Prostate gland (tissue), 2 donors: ENCODE measurements at regions of chr12 and their contacts with region 1.

Region 1: DNA sequence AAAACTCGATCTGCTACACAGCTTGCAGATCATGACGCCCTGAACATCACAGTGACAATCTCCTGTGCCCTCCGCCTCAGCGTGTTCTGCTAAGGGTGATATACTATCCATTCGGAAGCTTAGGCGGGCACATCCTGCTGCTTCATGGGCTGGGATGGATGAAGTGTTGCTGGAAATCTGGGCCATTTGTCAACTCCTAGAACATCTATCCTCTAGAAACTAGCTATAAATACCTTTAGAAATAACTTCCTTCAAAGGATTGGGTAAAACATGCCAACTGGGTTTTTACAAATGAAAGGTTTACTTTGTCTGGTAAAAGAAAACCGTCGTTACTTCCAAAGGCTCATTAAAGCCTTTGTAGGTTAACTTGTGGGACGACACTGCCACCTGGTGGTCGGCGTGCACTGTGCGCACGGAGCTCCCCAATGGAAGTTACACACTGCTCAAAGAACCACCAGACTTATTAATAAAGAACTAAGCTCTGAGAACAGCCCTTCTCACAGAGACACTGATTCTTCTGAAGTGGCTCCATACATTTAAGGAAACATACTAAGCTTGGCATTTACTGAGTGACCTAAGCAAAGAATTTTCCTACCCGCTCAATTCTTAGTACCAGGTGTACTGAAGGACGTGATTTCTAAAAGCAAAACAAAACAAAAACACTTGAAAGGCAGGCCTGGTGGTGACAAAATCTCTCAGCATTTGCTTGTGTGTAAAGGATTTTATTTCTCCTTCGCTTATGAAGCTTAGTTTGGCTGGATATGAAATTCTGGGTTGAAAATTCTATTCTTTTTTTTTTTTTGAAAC is 21.6 kb upstream of the CACNA2D4 start:
- DNase-seq: peak; percentile 81
- H3K4me3 ChIP-seq: no peak overlapping the region
- H3K27ac ChIP-seq: peak overlapping the region; percentile 21 to 42
- H3K4me1 ChIP-seq: no peaks in the 10 kb centered on the region
- H3K27me3 ChIP-seq: no peaks in the 10 kb centered on the region
- CTCF ChIP-seq: peak; percentile 92 to 99 (median 96)
- POLR2A ChIP-seq: no peak

Region 2: DNA sequence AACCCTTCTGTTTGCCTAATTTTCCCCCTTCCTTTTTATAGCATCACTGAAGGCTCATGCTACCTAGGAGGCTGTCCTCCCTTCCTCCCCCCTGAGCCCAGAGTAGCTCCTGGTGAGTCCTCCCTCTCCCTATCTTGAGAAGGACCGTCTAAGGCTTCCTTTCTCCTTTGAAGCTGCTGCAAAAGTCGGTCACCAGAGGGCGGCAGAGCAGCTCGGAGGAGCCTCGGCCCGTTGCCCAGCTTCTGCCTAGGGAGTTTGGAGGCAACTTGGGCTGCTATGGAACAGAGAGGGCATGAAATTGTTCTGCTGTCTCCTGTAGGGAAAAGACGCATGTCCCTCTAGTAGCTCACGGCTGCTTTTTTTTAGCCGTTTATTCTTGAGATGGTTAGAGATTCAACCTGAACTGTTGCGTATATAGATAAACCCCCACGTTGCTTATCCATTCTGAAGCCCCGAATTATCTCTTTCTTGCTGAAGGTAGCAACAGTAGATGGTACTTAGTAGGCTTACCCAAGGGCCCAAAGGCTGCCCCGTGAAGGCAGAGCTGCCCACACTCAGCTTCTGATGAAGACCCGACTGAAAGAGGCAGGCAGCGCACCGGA is 305.3 kb before region 1 on chr12:
- intact Hi-C with region 1: loop called (anchors 5 kb)
- DNase-seq: peak; percentile 67
- H3K4me3 ChIP-seq: no peak overlapping the region
- H3K27ac ChIP-seq: peak overlapping the region; percentile 17 to 26
- H3K4me1 ChIP-seq: peaks cover 8% of the 10 kb centered on the region
- H3K27me3 ChIP-seq: no peaks in the 10 kb centered on the region
- CTCF ChIP-seq: peak; percentile 9 to 77 (median 64)
- POLR2A ChIP-seq: no peak

Region 3: GRCh38 chr12:1644534-1645438 is 295.2 kb before region 1 on chr12:
- intact Hi-C with region 1: loop called (anchors 5 kb)
- DNase-seq: peak; percentile 64
- H3K4me3 ChIP-seq: no peak overlapping the region
- H3K27ac ChIP-seq: no peak overlapping the region
- H3K4me1 ChIP-seq: no peaks in the 10 kb centered on the region
- H3K27me3 ChIP-seq: no peaks in the 10 kb centered on the region
- CTCF ChIP-seq: no peak
- POLR2A ChIP-seq: no peak

Region 4: DNA sequence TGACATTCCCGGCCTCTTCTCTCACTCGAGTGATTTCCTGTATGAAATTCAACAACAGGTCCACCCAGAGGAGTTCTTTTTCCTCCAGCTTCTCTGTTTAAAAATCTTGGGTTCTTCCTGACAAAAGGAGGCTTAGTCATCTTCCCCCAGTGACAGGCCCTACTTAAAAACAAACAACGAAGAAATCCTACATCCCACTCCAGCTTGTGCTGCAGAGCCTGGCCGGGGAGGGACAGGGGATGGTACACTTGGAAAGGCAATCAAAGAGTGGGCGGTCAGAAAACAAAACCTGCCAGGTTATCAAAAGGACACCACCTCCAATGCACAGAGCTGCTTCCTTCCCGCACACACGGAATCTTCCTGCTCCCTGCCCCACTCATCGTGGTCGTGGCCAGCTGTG is 214.0 kb after region 1 on chr12:
- intact Hi-C with region 1: no loop called
- DNase-seq: no peak
- H3K4me3 ChIP-seq: no peak overlapping the region
- H3K27ac ChIP-seq: no peak overlapping the region
- H3K4me1 ChIP-seq: no peaks in the 10 kb centered on the region
- H3K27me3 ChIP-seq: no peaks in the 10 kb centered on the region
- CTCF ChIP-seq: no peak
- POLR2A ChIP-seq: no peak

Region 5: GRCh38 chr12:2273288-2273687 is 333.3 kb after region 1 on chr12:
- intact Hi-C with region 1: loop called (anchors 10 kb)
- DNase-seq: no peak
- H3K4me3 ChIP-seq: no peak overlapping the region
- H3K27ac ChIP-seq: no peak overlapping the region
- H3K4me1 ChIP-seq: no peaks in the 10 kb centered on the region
- H3K27me3 ChIP-seq: no peaks in the 10 kb centered on the region
- CTCF ChIP-seq: peak in 1 of 4 experiments; percentile 33
- POLR2A ChIP-seq: no peak